ENCODE measurements at regions of chr2 and their contacts with region 1.

Region 1: GRCh38 chr2:240232961-240233893 is 92.8 kb upstream of the OTOS start:
- DNase-seq: peak; percentile 88 to 96
- ATAC-seq: peak; percentile 85
- H3K4me3 ChIP-seq: no peak overlapping the region
- H3K27ac ChIP-seq: peak overlapping the region in 1 of 2 donors; percentile 46
- H3K4me1 ChIP-seq: no peaks in the 10 kb centered on the region
- H3K27me3 ChIP-seq: no peaks in the 10 kb centered on the region

Region 2: GRCh38 chr2:240013343-240013742 is 219.9 kb before region 1 on chr2:
- intact Hi-C with region 1: no loop called
- DNase-seq: no peak
- ATAC-seq: no peak
- H3K4me3 ChIP-seq: no peak overlapping the region
- H3K27ac ChIP-seq: no peak overlapping the region
- H3K4me1 ChIP-seq: no peaks in the 10 kb centered on the region
- H3K27me3 ChIP-seq: no peaks in the 10 kb centered on the region

Region 3: DNA sequence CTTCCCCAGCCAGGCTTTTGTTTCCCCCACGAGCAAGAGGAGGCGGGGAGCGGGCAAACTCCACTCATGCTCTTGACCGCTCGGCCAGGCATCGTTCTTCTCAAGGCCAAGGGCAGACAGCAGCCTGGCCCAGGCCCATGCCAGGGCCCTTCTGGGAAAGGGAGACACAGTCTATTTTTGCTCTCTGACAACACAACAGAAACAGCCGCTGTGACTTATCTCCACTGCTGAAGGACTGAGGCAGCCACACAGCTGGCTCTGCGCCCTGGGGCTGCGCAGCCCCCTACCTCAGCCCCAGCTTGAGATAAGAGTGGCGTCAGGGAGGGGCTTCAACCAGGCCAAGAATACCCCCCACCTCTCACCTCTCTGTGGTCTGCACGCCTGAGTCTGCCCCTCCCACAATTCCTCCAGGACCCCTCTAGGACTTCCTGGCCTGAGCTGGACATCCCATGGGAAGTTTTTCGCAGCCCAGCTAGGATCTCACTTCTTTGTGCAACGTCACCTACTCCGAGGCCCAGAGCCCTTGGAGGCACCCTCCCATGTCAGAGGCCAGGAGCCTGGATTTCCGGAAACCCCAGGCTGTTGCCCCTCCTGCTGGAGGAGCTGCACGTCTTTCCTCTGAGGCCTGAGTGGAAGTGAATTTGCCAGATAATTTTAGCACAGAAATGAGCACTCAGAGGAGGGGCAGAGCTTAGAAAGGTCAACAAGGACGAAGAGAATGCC is 26.1 kb after region 1 on chr2:
- intact Hi-C with region 1: loop called in 1 of 2 experiments (anchors 1 kb)
- DNase-seq: peak; percentile 91 to 93
- ATAC-seq: peak; percentile 89
- H3K4me3 ChIP-seq: no peak overlapping the region
- H3K27ac ChIP-seq: peak overlapping the region; percentile 85 to 99
- H3K4me1 ChIP-seq: no peaks in the 10 kb centered on the region
- H3K27me3 ChIP-seq: no peaks in the 10 kb centered on the region

Region 4: GRCh38 chr2:240343176-240343947 is 110.1 kb after region 1 on chr2:
- intact Hi-C with region 1: loop called in 1 of 2 experiments (anchors 2 kb)
- DNase-seq: no peak
- ATAC-seq: no peak
- H3K4me3 ChIP-seq: no peak overlapping the region
- H3K27ac ChIP-seq: no peak overlapping the region
- H3K4me1 ChIP-seq: no peaks in the 10 kb centered on the region
- H3K27me3 ChIP-seq: no peaks in the 10 kb centered on the region

Region 5: DNA sequence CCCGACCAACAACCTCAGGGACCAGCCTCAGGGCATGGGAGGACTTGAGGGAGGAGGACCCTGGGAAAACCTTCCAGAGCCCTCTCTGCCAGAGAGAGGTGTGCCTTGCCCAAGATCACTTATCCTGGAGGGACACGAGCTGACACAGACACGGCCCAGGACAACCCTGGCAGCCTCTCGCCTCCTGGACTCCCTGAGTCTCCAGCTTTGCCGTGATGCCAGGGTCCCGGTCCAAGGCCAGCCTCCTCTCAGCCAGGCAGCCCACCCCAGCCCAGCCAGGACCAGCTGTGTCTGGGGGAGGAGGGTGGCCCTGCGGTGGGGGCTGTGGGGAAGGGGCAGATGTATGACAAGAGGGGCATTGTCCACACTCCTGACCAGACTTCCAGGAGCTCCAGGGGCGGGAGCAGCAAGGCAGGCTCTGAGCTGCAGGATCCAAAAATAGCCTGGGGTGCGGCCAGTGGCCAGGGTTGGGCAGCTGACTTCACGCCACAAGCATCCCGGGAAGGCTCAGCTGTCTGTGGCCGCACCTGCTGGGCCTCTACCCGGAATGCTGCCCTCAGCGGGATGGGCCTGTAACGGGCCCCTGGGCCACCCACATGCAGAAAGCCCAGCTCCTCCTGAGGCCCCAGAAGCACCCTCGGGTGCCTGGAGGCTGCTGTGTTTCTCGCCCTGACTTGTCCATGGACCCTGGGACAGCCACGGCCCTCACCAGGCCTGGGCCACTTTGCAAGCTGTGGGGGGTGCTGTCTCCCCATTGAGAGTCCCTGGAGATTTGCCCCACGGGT is 136.8 kb after region 1 on chr2:
- intact Hi-C with region 1: loop called (anchors 5 kb)
- DNase-seq: peak; percentile 88 to 93
- ATAC-seq: peak; percentile 67
- H3K4me3 ChIP-seq: no peak overlapping the region
- H3K27ac ChIP-seq: peak overlapping the region; percentile 59 to 94
- H3K4me1 ChIP-seq: no peaks in the 10 kb centered on the region
- H3K27me3 ChIP-seq: no peaks in the 10 kb centered on the region

Region 6: DNA sequence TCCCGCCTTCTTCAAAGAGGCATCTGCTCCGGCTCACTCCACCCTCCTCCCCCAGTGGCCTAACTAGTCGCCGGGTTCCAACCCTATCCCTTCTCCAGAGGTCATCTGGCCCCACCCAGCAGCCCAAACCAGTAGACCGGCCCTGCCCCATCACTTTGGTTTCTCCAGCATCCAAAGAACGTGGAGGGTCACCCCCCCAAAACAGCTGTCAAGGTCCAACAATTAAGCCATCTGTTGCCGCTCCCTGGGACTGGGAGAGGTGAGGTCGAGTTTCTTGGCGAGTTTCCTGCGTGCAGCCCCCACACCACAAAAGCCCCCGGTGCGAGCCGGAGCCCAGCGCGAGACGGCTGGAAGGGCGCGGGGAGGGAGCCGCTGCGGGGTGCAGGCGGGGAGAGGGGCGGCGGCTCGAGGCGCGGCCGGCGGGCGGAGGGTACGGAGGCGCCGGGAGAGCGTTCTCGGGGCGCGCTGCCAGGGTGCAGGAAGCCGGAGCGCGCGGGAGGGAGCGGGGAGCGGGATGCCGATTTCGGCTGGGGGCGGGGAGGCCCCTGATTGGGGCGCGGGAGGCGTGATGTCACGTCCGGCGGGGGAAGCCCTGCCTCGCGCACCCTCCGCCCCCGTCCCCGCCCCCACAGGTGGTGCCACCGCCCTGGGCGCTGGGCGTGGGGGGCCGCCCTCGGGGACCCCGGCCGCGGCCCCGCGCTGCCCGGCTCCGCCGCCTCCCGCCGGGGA is 201.7 kb after region 1 on chr2:
- intact Hi-C with region 1: loop called (anchors 1 to 2 kb)
- DNase-seq: peak; percentile 94 to 98
- ATAC-seq: peak; percentile 87
- H3K4me3 ChIP-seq: peak overlapping the region; percentile 71 to 80
- H3K27ac ChIP-seq: peak overlapping the region in 1 of 2 donors; percentile 35
- H3K4me1 ChIP-seq: no peaks in the 10 kb centered on the region
- H3K27me3 ChIP-seq: no peaks in the 10 kb centered on the region

Region 7: DNA sequence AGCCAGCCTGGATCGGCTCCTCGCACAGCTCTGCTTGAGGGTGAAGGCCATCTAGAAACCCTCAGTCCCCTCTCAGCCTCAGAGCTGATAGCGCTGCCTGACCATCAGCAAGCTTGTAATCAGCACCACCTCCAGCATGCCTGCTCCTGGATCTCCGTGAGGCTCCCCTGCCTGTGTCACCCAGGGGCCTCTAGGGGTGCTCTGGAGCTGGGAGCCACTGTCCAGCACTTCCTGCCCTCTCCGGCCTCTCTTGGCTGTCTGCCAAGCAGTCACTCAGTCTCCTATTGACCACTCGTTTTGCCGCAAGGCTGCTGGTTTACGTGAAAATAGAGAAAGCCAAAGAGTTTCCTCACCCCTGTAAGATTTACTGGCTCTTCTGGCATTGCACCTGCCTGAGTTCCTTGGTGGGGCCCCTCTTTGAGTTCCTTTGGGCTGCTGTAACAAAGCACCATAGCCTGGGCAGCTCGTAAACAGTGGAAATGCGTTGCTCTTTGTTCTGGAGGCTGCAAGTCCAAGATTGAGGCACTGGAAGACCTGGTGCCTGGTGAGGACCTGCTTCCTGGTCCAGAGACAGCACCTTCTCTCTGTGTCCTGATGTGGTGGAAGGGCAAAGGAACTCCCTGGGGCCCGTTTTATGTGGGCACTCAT is 371.2 kb after region 1 on chr2:
- intact Hi-C with region 1: no loop called
- DNase-seq: peak; percentile 91
- ATAC-seq: peak; percentile 53
- H3K4me3 ChIP-seq: no peak overlapping the region
- H3K27ac ChIP-seq: no peak overlapping the region
- H3K4me1 ChIP-seq: no peaks in the 10 kb centered on the region
- H3K27me3 ChIP-seq: no peaks in the 10 kb centered on the region

Measured in aorta (tissue), 5 donors.